T-cell (primary cell): ENCODE measurements at regions of chr14 and their contacts with region 1.

Region 1: DNA sequence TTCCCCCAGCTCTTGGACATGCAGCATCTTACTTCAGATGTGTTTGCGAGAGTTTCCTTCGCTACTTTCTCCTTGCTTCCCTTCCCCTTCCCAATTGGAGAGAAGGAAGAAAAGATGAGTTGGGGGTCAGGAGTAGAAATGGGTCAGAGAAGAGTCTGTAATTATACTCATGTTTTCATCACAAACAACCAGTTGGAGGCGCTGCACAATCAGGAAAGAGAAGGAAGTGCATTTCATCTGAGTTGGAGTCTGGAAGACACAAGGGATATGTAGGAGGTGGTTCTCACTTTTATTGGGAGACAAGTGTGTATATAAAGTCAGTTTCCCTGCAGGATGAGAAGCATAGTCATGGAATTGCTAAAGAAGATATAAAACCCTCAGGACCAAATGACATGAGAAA is 31.3 kb upstream of the VSX2 start:
- DNase-seq: peak in 1 of 35 experiments; percentile 8
- ATAC-seq: no peak
- H3K4me3 ChIP-seq: no peak overlapping the region
- H3K4me3 Mint-ChIP-seq: no peak overlapping the region
- H3K27ac ChIP-seq: no peak overlapping the region
- H3K27ac Mint-ChIP-seq: no peak overlapping the region
- H3K4me1 ChIP-seq: no peaks in the 10 kb centered on the region
- H3K4me1 Mint-ChIP-seq: no peaks in the 10 kb centered on the region
- H3K27me3 ChIP-seq: peaks cover 0 to 10% of the 10 kb centered on the region in 2 experiments
- H3K27me3 Mint-ChIP-seq: peaks cover 6 to 12% of the 10 kb centered on the region in 2 donors

Region 2: GRCh38 chr14:75223664-75224154 is 1015.8 kb after region 1 on chr14:
- CTCF ChIA-PET with region 1: interaction called in 1 of 2 experiments, 11 read pairs
- POLR2A ChIA-PET with region 1: no interaction called
- DNase-seq: peak in 1 of 35 experiments; percentile 32
- ATAC-seq: no peak
- H3K4me3 ChIP-seq: no peak overlapping the region
- H3K4me3 Mint-ChIP-seq: no peak overlapping the region
- H3K27ac ChIP-seq: no peak overlapping the region
- H3K27ac Mint-ChIP-seq: no peak overlapping the region
- H3K4me1 ChIP-seq: peaks cover 3 to 10% of the 10 kb centered on the region in 2 experiments
- H3K4me1 Mint-ChIP-seq: peaks cover 14 to 26% (median 17%) of the 10 kb centered on the region in 3 donors
- H3K27me3 ChIP-seq: peaks cover 0 to 3% of the 10 kb centered on the region in 2 experiments
- H3K27me3 Mint-ChIP-seq: no peaks in the 10 kb centered on the region